HEK293T (cell line): ENCODE measurements at regions of chr10 and their contacts with region 1.

Region 1: DNA sequence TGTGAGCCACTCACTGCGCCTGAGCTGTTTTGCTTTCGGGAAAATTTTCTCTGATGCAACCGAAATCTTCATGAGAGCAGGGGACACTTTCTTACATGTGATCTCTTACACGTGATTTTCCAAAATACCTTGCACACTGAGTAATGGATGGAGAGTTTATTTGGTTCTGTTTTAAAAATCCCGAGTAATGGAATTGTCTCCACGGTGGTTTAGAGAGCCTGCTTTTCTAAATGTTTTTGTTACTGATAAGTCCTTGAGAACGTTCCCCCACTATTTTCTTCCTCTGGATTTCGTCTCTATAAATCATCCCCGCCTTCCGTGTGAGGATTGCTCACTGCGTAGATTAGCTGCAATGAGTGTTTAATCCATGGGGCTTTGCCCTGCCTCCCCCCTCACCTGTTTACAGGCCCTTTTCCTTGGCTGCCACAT is 25.7 kb downstream of the CAMK1D start:
- DNase-seq: no peak

Region 2: GRCh38 chr10:12221323-12222298 is 153.5 kb before region 1 on chr10:
- CTCF ChIA-PET with region 1: no interaction called
- POLR2A ChIA-PET with region 1: no interaction called
- DNase-seq: no peak

Region 3: DNA sequence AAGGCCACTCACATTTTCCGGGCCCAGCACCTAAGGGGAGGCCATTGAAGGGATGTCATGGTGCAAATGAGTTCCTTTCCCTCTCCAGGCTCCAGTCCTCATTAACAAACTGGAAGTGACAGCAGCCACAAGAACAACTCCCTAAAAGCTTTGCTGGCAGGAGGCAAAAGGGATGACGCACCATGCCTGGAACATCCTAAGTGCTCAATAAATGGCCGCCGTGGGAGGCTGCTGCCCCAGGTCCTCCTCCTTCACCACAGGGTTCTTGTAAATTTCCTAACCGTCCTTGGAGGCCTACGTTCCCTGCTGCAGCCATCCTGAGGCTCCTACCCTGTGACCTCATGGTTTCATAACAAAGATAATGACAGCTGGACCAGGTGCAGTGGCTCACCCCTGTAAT is 67.0 kb before region 1 on chr10:
- CTCF ChIA-PET with region 1: no interaction called
- POLR2A ChIA-PET with region 1: no interaction called
- DNase-seq: no peak

Region 4: GRCh38 chr10:12348870-12349628 is 26.0 kb before region 1 on chr10 and contains the start of gene CAMK1D:
- CTCF ChIA-PET with region 1: no interaction called
- POLR2A ChIA-PET with region 1: no interaction called
- DNase-seq: peak; percentile 61

Region 5: DNA sequence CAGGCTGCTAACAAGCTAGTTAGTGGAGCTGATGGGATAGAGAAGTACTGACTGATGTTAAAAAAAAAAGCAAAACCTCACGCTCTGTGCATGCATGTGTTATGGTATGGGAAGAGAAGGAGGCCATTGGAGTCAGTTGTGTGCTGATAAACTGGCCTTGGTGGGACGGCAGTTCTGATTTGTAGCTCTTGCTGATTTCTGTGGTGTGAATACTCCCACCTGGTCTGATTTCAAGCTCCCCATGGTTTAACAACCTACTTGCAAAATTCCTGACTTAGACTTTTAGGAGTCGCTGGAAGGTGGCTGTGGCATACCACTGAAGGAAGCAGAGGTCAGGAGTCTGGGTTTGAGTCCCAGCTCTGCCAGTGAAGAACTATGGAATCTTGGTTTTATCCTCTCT is 10.5 kb before region 1 on chr10:
- CTCF ChIA-PET with region 1: no interaction called
- POLR2A ChIA-PET with region 1: no interaction called
- DNase-seq: no peak

Region 6: GRCh38 chr10:12403119-12403518 is 28.0 kb after region 1 on chr10:
- CTCF ChIA-PET with region 1: interaction called, 10 read pairs
- POLR2A ChIA-PET with region 1: no interaction called
- DNase-seq: no peak